Sciatic nerve (tissue), 2 donors: ENCODE measurements at regions of chr6 and their contacts with region 1.

Region 1: DNA sequence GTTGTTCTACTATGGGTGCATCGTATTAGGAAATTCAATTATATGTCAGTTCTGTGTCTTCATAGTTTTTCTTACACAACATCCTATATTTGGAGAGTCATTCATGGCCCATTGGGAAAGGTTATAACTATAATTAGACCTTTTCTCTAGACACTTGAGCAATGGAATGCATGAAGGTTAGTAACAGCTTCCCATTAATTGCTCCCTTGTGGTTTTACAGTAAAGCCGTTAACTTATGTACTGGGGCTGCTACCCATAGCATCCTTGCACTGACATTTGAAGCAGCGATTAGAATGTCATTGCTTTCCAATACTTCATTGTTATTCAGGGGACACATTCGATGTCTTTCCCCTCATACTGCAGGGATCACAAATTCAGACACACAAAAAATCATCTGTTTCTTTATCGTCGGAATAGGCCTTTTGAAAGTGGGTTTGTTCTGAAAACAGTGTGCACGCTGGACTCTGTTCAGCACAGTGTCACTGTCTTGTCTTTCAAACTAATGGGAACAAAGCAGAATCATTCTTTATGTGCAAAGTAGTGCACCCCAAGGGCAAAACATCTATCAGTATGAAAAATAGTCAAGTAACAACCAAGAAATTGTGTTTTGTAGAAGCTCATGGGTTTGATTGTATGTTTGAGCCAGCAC is 634.3 kb upstream of the MAP3K7 start:
- DNase-seq: no peak
- ATAC-seq: no peak

Region 2: GRCh38 chr6:92132451-92132850 is 911.3 kb after region 1 on chr6:
- intact Hi-C with region 1: no loop called
- DNase-seq: no peak
- ATAC-seq: no peak

Region 3: GRCh38 chr6:92979281-92979680 is 1758.1 kb after region 1 on chr6:
- intact Hi-C with region 1: loop called (anchors 5 kb)
- DNase-seq: no peak
- ATAC-seq: no peak